GM12878 (cell line): ENCODE measurements at regions of chr14 and their contacts with region 1.

Region 1: GRCh38 chr14:39875028-39875427 is 442.8 kb upstream of the FBXO33 start:
- DNase-seq: no peak
- ATAC-seq: peak; percentile 55
- H3K4me3 ChIP-seq: no peak overlapping the region
- H3K27ac ChIP-seq: no peak overlapping the region
- H3K4me1 ChIP-seq: peaks cover 3% of the 10 kb centered on the region
- H3K27me3 ChIP-seq: no peaks in the 10 kb centered on the region
- CTCF ChIP-seq: no peak
- EP300 ChIP-seq: no peak
- POLR2A ChIP-seq: no peak
- RAD21 ChIP-seq: no peak

Region 2: DNA sequence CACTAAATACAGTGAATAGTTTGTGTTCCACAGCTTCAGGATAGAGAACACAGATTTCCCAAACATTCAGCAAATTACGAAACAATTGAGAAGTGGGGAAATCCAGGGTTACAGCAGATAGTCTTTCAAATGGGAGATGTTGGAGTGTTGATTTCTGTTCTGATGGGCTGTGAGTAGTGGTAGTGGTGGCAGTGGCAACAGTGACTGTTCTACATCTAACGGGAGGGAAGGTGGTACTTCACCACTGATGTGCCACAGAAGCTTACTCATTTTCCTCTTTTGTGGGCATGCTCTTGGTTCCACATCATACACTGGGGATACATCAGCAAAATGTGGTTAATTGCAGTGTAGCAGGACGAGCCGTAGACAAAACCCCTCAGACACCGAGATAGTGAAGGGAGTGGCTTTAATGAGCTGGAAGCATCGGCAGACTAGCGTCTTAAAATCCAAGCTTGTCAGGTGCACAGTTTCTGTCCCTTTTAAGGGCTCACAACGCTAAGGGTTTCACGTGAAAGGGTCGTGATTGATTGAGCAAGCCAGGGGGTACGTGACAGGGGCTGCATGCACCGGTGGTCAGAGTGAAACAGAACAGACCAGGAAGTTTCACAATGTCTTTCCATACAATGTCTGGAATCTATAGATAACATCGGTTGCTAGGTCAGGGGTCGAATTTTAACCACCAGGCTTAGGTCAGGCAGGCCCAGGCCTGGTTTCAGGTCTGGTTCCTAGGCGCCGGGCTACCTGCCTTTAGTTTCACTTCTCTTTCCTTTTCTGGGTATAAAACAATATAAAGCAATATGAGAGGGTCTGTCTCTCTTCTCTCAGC is 112.2 kb before region 1 on chr14:
- CTCF ChIA-PET with region 1: no interaction called
- POLR2A ChIA-PET with region 1: no interaction called
- RAD21 ChIA-PET with region 1: no interaction called
- SMC1A ChIA-PET with region 1: no interaction called
- in situ Hi-C with region 1: no loop called
- intact Hi-C with region 1: loop called (anchors 5 kb)
- DNase-seq: peak; percentile 59
- ATAC-seq: peak; percentile 92
- H3K4me3 ChIP-seq: peak overlapping the region; percentile 20; the same call in 1 of the 2 replicates
- H3K27ac ChIP-seq: 0 out of 2 replicates have a peak overlapping the region, but pooled peaks have one; percentile 13
- H3K4me1 ChIP-seq: peaks cover 7% of the 10 kb centered on the region
- H3K27me3 ChIP-seq: no peaks in the 10 kb centered on the region
- CTCF ChIP-seq: no peak
- EP300 ChIP-seq: peak in 1 of 2 experiments; percentile 29; a peak in 1 of 4 replicates
- POLR2A ChIP-seq: no peak
- RAD21 ChIP-seq: no peak

Region 3: DNA sequence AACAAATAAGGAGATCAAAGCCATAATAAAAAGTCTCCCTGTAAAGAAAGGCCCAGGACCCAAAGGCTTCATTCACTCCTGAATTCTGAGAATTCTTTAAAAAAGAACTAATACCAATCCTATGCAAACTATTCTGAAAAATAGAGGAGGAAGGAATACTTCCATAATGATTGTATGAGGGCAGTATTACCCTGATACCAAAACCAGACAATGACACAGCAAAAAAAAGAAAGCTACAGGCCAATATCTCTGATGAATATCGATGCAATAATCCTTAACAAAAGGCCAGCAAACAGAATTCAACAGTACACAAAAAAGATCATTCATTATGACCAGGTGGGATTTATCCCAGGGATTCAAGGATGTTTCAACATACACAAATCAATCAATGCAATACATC is 15.0 kb after region 1 on chr14:
- CTCF ChIA-PET with region 1: no interaction called
- POLR2A ChIA-PET with region 1: no interaction called
- RAD21 ChIA-PET with region 1: no interaction called
- SMC1A ChIA-PET with region 1: no interaction called
- in situ Hi-C with region 1: no loop called
- intact Hi-C with region 1: no loop called
- DNase-seq: no peak
- ATAC-seq: no peak
- H3K4me3 ChIP-seq: no peak overlapping the region
- H3K27ac ChIP-seq: no peak overlapping the region
- H3K4me1 ChIP-seq: no peaks in the 10 kb centered on the region
- H3K27me3 ChIP-seq: no peaks in the 10 kb centered on the region
- CTCF ChIP-seq: no peak
- EP300 ChIP-seq: no peak
- POLR2A ChIP-seq: no peak
- RAD21 ChIP-seq: no peak

Region 4: DNA sequence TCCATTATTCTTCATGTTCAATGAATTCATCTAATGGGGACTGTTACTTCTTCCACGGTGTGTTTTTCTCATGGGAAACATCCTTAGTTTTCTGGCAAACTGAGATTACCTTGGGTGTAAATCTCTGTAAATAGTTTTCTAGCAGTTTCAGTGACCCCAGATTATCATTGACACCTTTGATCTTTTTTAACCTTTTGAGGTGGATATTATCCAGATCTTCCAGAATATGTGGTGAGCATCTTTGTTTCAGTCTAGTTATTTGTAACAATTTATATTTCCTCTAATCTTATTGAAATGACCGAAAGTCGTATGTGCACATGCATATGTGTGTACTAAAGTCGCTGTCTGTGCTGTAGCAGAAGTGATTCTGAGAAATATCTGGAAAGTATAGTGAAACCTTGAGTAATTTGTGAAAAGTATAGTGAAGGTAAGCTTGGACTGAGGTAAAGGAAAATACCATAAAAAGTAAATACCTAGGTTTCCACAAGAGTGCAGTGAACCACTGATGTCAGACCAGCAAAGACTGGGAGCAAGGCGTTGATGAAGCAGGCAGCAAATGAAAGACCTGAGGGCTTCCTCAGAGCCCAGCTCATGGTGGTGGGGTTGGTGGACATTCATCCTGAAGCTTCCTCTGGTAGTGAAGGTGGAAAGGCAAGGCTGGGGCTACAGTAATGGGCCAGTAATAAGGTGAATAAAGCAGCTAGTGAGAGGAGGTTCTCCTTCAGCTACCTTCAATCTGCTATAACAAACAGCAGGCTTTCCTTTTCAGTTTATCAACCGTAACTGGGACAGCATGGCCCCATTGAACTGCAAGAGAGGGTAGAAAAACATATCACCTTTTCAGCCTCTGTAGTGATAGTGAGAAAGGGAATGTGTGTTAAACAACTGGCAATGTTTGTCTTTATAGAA is 37.4 kb after region 1 on chr14:
- CTCF ChIA-PET with region 1: no interaction called
- POLR2A ChIA-PET with region 1: interaction called, 4 read pairs
- RAD21 ChIA-PET with region 1: no interaction called
- SMC1A ChIA-PET with region 1: interaction called, 5 read pairs
- in situ Hi-C with region 1: no loop called
- intact Hi-C with region 1: loop called (anchors 2 kb)
- DNase-seq: peak; percentile 16
- ATAC-seq: peak; percentile 96
- H3K4me3 ChIP-seq: no peak overlapping the region
- H3K27ac ChIP-seq: no peak overlapping the region; the same call in 1 of the 2 replicates
- H3K4me1 ChIP-seq: peaks cover 4% of the 10 kb centered on the region
- H3K27me3 ChIP-seq: no peaks in the 10 kb centered on the region
- CTCF ChIP-seq: no peak
- EP300 ChIP-seq: peak; percentile 61 to 67; a peak in 3 of 4 replicates
- POLR2A ChIP-seq: no peak
- RAD21 ChIP-seq: no peak

Region 5: GRCh38 chr14:39974036-39974435 is 99.0 kb after region 1 on chr14:
- CTCF ChIA-PET with region 1: interaction called, 5 read pairs
- POLR2A ChIA-PET with region 1: no interaction called
- RAD21 ChIA-PET with region 1: interaction called, 4 read pairs
- SMC1A ChIA-PET with region 1: interaction called, 5 read pairs
- in situ Hi-C with region 1: no loop called
- intact Hi-C with region 1: loop called (anchors 5 kb)
- DNase-seq: peak; percentile 76
- ATAC-seq: peak; percentile 98
- H3K4me3 ChIP-seq: no peak overlapping the region
- H3K27ac ChIP-seq: no peak overlapping the region
- H3K4me1 ChIP-seq: no peaks in the 10 kb centered on the region
- H3K27me3 ChIP-seq: no peaks in the 10 kb centered on the region
- CTCF ChIP-seq: no peak
- EP300 ChIP-seq: peak; percentile 92 to 96
- POLR2A ChIP-seq: no peak
- RAD21 ChIP-seq: no peak